ENCODE measurements at regions of chr7 and their contacts with region 1.

Region 1: GRCh38 chr7:40232242-40232893 is 97.6 kb downstream of the SUGCT start:
- DNase-seq: peak in 1 of 5 donors; percentile 30
- H3K4me3 ChIP-seq: no peak overlapping the region
- H3K27ac ChIP-seq: no peak overlapping the region
- H3K4me1 ChIP-seq: peaks cover 2% of the 10 kb centered on the region
- H3K27me3 ChIP-seq: no peaks in the 10 kb centered on the region
- CTCF ChIP-seq: peak in 2 of 3 donors; percentile 41 to 51
- EP300 ChIP-seq: no peak
- POLR2A ChIP-seq: no peak

Region 2: GRCh38 chr7:40371806-40372440 is 139.6 kb after region 1 on chr7:
- intact Hi-C with region 1: no loop called
- DNase-seq: no peak
- H3K4me3 ChIP-seq: no peak overlapping the region
- H3K27ac ChIP-seq: no peak overlapping the region
- H3K4me1 ChIP-seq: no peaks in the 10 kb centered on the region
- H3K27me3 ChIP-seq: no peaks in the 10 kb centered on the region
- CTCF ChIP-seq: no peak
- EP300 ChIP-seq: no peak
- POLR2A ChIP-seq: no peak

Region 3: DNA sequence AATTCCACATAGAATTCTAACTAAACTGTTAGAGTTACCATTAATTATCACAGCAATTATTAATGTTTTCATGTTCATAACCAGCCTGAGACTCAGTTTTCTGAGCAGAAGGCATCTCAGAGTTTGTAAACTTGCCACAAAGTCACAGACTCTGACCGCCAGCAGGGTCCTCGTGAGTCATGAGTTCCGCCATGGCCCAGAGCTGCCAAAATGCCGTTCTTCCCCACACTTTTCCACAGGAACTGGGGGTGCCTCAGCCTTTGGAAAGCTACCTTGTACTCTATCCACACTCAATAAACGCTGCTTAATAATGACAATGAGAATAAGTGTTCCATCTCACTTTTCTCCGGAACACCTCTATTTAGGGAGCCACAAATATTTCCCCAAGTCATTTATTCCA is 1492.6 kb after region 1 on chr7:
- intact Hi-C with region 1: loop called in 1 of 4 experiments (anchors 10 kb)
- DNase-seq: no peak
- H3K4me3 ChIP-seq: no peak overlapping the region
- H3K27ac ChIP-seq: no peak overlapping the region
- H3K4me1 ChIP-seq: no peaks in the 10 kb centered on the region
- H3K27me3 ChIP-seq: no peaks in the 10 kb centered on the region
- CTCF ChIP-seq: no peak
- EP300 ChIP-seq: no peak
- POLR2A ChIP-seq: no peak